PC-3 (cell line): ENCODE measurements at regions of chr1 and their contacts with region 1.

Region 1: DNA sequence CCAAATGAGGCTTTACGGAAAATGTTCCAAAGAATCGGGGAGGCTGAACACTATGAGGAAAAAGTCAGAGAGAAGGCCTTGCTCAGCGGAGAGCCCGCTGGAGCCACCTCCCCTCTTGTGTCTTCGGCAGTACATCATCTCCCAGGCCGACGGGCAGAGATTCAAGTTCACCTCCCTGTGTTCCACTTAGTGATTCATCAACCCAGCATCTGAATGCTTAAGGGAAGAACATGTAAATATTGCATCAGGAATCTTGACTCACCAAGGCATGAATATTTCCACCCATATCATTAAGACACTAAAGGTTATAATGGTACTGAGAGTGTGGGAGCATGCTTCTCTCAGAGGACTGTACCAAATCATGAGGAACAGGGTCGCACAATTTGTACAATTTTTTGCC is 172.5 kb downstream of the ST6GALNAC5 start:
- DNase-seq: peak; percentile 97
- ATAC-seq: peak; percentile 94
- H3K4me3 ChIP-seq: no peak overlapping the region
- H3K27ac ChIP-seq: peak overlapping the region; percentile 62
- H3K4me1 ChIP-seq: peaks cover 19% of the 10 kb centered on the region
- H3K27me3 ChIP-seq: no peaks in the 10 kb centered on the region
- CTCF ChIP-seq: no peak

Region 2: DNA sequence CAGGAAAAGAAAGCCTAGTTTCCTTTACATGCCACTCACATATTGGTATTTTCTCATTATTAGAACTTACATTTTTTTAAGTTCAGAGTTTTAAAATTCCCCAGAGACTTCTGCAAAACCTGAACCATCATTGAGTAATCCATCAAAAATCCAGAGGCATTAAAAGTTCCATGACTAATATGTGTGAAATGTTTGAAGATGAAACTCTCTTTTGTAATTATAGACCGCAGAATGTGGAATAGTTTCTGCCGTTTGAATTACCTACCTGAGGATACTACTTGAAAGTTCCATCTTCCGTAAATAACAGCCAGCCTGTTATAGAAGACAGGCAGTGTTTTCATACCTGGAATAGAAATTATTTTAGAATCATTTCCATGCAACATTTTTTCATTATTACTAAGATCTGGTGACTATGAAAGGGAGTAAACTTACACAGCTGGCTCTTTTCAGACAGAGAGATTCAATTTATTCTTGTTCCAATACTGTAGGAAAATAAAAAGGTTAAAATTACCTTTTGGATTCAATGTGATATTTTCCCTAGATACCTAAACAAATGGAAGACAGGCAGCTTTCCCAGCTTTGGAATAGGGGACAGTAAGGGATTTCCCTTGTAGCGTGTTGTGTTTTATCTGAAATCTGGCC is 41.0 kb before region 1 on chr1:
- CTCF ChIA-PET with region 1: no interaction called
- POLR2A ChIA-PET with region 1: no interaction called
- intact Hi-C with region 1: loop called (anchors 2 kb)
- DNase-seq: peak; percentile 96
- ATAC-seq: peak; percentile 98
- H3K4me3 ChIP-seq: 0 out of 2 replicates have a peak overlapping the region, but pooled peaks have one; percentile 6
- H3K27ac ChIP-seq: peak overlapping the region; percentile 88
- H3K4me1 ChIP-seq: peaks cover 26% of the 10 kb centered on the region
- H3K27me3 ChIP-seq: no peaks in the 10 kb centered on the region
- CTCF ChIP-seq: no peak

Region 3: DNA sequence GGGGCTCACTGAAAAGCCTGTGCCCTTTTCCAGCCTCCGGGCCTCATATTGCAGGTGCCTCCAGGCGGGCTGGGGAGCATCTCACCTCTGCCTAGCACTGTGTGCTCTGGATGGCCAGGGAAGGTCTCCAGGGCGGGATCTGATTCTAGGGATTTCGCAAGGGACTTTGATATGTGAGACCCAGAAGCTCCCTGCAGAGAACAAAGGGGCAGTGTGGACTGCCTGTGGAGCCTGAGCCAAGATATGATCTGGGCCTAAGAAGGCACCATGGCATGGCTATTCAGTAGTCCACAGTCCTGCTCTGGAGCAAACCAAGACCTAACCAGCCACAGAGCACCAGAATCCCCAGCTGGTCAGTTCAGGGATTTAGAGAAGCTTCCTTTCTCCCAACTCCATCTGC is 15.2 kb before region 1 on chr1:
- CTCF ChIA-PET with region 1: no interaction called
- POLR2A ChIA-PET with region 1: no interaction called
- intact Hi-C with region 1: no loop called
- DNase-seq: no peak
- ATAC-seq: no peak
- H3K4me3 ChIP-seq: no peak overlapping the region
- H3K27ac ChIP-seq: no peak overlapping the region
- H3K4me1 ChIP-seq: peaks cover 9% of the 10 kb centered on the region
- H3K27me3 ChIP-seq: no peaks in the 10 kb centered on the region
- CTCF ChIP-seq: no peak

Region 4: GRCh38 chr1:77056525-77056924 is 16.8 kb after region 1 on chr1:
- CTCF ChIA-PET with region 1: interaction called, 3 read pairs
- POLR2A ChIA-PET with region 1: interaction called, 5 read pairs
- intact Hi-C with region 1: loop called (anchors 2 kb)
- DNase-seq: peak; percentile 83
- ATAC-seq: peak; percentile 97
- H3K4me3 ChIP-seq: no peak overlapping the region
- H3K27ac ChIP-seq: no peak overlapping the region
- H3K4me1 ChIP-seq: peaks cover 15% of the 10 kb centered on the region
- H3K27me3 ChIP-seq: no peaks in the 10 kb centered on the region
- CTCF ChIP-seq: no peak

Region 5: DNA sequence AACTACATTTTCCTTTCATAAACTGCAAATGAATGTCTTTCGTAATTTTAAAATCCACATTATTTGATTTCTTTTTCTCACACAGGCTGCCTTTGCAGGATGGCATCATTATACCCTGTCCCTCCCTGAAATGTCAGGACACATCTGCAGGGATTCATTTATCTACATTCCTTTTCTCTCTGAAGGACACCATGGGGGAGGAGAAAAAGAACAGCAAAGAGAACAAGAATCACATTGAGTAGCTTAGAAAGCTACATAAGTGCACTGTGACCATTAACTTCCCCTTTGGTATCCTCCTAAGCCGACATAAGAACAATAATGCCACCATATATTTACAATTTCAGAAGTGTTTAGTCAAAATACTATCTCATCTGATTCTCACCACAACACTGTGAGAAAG is 50.0 kb after region 1 on chr1:
- CTCF ChIA-PET with region 1: no interaction called
- POLR2A ChIA-PET with region 1: no interaction called
- intact Hi-C with region 1: no loop called
- DNase-seq: no peak
- ATAC-seq: no peak
- H3K4me3 ChIP-seq: no peak overlapping the region
- H3K27ac ChIP-seq: no peak overlapping the region
- H3K4me1 ChIP-seq: no peaks in the 10 kb centered on the region
- H3K27me3 ChIP-seq: no peaks in the 10 kb centered on the region
- CTCF ChIP-seq: no peak

Region 6: GRCh38 chr1:77100870-77101269 is 61.1 kb after region 1 on chr1:
- CTCF ChIA-PET with region 1: no interaction called
- POLR2A ChIA-PET with region 1: no interaction called
- intact Hi-C with region 1: loop called (anchors 2 kb)
- DNase-seq: peak; percentile 59
- ATAC-seq: peak; percentile 83
- H3K4me3 ChIP-seq: no peak overlapping the region
- H3K27ac ChIP-seq: no peak overlapping the region
- H3K4me1 ChIP-seq: peaks cover 13% of the 10 kb centered on the region
- H3K27me3 ChIP-seq: no peaks in the 10 kb centered on the region
- CTCF ChIP-seq: no peak

Region 7: DNA sequence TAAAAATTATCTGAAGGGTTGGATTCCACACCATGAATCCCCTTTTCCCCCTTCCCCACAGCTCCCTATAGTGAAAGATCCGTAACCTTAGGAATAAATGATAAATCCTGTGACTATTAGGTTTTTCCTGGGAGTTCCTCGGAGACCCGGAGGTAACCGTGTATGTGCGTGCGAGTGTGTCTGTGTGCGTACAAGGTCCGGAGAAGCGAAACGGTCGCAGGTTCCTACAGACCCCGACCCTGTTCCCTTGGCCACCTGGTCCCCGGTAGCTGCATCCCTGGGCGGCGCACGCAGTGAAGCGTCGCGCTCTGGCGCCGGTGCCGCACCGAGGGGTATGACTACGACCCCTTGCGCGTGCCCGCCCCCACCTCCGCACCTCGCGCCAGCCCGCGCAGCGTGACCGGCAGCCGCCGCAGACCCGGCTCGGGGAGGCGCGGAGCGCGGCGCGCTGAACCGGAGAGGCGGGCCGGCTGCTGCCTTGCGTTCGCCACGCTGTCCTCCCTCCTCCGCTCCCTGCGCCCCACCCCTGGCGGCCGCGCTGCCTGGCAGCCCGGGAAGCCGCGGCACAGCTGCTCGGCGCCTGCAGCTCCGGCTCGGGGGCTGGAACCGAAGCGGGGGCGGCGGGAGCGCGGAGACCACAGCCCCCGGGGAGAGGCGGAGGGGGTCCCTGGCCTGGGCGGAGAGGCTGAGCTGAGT is 241.9 kb after region 1 on chr1 and contains the start of gene AK5:
- CTCF ChIA-PET with region 1: no interaction called
- POLR2A ChIA-PET with region 1: no interaction called
- intact Hi-C with region 1: no loop called
- DNase-seq: peak; percentile 46
- ATAC-seq: peak; percentile 77
- H3K4me3 ChIP-seq: peak within 1 kb of the TSS; percentile 85
- H3K27ac ChIP-seq: no peak within 1 kb of the TSS
- H3K4me1 ChIP-seq: peaks cover 13% of the 10 kb centered on the region
- H3K27me3 ChIP-seq: no peaks in the 10 kb centered on the region
- CTCF ChIP-seq: no peak
- total RNA-seq, gene AK5: 3.4 and 3.8 TPM in 2 replicates